ENCODE measurements at regions of chr1 and their contacts with region 1.

Region 1: DNA sequence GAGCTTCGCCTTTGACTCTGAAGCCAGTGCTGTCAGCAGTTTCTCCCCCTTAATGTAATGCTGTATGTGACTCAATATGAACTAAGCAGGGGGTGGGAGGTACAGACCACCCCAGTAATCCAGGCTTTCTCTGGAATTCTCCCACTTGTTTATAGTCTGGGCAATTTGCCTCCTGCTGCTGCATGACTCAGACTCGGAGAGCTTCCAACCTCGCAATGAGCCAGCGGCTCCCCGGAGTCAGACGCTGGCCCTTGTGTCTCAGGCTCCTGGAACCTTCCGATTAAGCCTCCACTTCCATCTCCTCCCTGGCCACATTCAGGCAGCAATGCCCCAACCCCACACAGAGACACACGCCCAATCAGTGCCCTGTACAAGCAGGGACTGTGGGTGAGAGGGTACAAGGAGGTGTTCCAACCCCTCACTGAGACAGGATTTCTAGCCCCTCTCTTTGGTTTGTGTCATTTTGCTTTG is 471.7 kb upstream of the VAMP3 start:
- DNase-seq: peak; percentile 46 to 78 (median 68)
- ATAC-seq: peak; percentile 37 to 90 (median 82)
- H3K4me3 ChIP-seq: no peak overlapping the region
- H3K27ac ChIP-seq: peak overlapping the region in 4 of 12 donors; percentile 40 to 44 (median 42)
- H3K4me1 ChIP-seq: peaks cover 0 to 18% (median 12%) of the 10 kb centered on the region in 12 donors
- H3K27me3 ChIP-seq: no peaks in the 10 kb centered on the region
- CTCF ChIP-seq: no peak
- POLR2A ChIP-seq: no peak

Region 2: DNA sequence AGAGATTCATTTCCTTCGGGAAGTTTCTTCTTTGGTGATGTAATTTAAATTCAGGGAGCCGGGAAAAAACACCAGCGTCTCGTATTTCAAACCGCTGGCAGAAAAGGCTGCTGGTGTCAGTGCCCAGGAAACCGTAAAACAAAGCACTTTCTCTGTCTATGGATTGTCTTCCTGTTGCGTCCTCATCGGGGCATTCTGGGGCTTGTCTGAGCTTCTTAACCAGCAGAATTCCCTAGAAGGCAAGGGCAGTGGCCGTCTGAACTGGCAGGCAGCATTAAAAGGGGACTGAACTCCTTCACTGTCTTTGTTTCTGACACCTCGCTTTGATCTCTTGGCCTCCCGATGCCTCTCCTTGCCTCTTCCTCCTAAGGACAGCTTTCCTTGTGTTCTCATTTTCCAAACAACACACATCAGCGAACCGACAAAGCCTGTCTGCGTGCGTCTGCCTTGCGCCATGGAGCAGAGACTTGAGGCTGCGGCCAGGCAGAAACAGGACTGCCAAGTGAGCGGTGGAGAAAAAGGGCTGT is 80.1 kb after region 1 on chr1:
- intact Hi-C with region 1: loop called in 1 of 10 experiments (anchors 10 kb)
- DNase-seq: peak in 1 of 5 donors; percentile 8
- ATAC-seq: no peak
- H3K4me3 ChIP-seq: no peak overlapping the region
- H3K27ac ChIP-seq: peak overlapping the region in 2 of 12 donors; percentile 9 to 58
- H3K4me1 ChIP-seq: peaks cover 0 to 17% (median 4%) of the 10 kb centered on the region in 12 donors
- H3K27me3 ChIP-seq: peaks cover 0 to 2% (median 0%) of the 10 kb centered on the region in 9 donors
- CTCF ChIP-seq: no peak
- POLR2A ChIP-seq: no peak

Region 3: DNA sequence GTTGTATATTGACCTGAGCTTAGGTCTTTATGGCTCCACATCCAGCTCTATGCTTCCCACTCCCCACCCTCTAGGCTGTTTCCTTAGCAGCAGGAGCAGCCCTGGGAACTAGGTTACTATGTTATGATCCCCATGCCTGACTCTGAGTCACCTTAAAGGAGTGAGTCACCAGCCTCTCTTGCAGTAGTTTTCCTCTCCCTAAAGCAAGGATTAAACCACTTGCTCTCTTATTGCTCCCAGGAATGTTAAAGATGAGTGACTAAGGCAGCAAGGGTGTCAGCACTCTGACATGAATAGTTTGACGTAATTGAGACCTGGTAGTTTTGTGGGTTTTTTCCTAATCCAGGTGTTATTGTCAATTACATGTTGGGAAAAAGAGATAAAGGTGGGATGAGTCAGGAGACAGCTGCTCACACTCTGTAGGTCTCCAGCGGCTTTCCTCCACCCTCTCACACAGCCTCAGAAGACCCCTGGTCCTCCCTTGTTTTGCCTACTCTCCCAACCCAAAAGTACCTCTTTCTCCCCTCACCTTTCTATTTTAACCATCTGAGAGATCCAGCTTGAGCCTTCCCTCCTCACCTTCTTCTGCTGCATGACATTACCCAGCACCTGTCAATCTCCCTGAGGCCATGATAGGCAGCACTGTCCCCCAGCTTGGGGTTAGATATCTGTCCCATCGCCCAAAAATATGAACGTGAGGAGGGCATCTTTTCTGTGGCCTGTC is 102.6 kb after region 1 on chr1:
- intact Hi-C with region 1: no loop called
- DNase-seq: no peak
- ATAC-seq: peak in 3 of 4 donors; percentile 16 to 90 (median 49)
- H3K4me3 ChIP-seq: no peak overlapping the region
- H3K27ac ChIP-seq: no peak overlapping the region
- H3K4me1 ChIP-seq: no peaks in the 10 kb centered on the region
- H3K27me3 ChIP-seq: no peaks in the 10 kb centered on the region
- CTCF ChIP-seq: no peak
- POLR2A ChIP-seq: no peak

Region 4: DNA sequence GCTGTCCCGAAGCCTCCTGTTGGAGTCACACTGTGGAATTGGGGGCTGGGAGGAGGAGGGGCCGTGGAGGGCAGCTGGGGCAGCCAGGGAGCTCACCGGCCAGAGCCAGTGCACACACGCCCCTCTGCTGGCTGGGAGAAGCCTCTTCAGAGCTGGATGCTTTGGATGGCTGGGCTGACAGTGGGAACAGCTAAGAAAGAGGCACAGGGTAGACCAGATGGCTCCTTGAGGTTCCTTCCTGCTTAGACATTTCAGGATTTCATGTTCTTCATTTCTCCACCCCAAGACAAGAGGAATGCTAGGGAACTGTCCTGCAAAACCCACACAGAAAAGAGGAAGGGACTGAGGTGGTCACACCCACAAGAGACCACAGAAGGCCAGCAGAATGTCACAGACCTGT is 217.0 kb after region 1 on chr1:
- intact Hi-C with region 1: loop called in 2 of 10 experiments (anchors 5 to 10 kb)
- DNase-seq: peak in 4 of 5 donors; percentile 30 to 59 (median 39)
- ATAC-seq: peak; percentile 30 to 75 (median 47)
- H3K4me3 ChIP-seq: no peak overlapping the region
- H3K27ac ChIP-seq: peak overlapping the region in 1 of 12 donors; percentile 36
- H3K4me1 ChIP-seq: peaks cover 0 to 28% (median 6%) of the 10 kb centered on the region in 12 donors
- H3K27me3 ChIP-seq: no peaks in the 10 kb centered on the region
- CTCF ChIP-seq: peak in 4 of 12 donors; percentile 10 to 28 (median 20)
- POLR2A ChIP-seq: no peak

Measured in heart left ventricle (tissue), 16 donors.